Activated T-helper 1 cell treated with anti-CD3 and anti-CD28 coated beads, Interleukin-12 subunit alpha, Interleukin-12 subunit beta, Interleukin-2, Interleukin-4 antibody, amounts not matched to agents 30 ng/mL and 10 ng/mL and 1 ng/mL, durations not matched to agents 14 hours and 24 hours and 36 hours (primary cell): ENCODE measurements at regions of chr15 and their contacts with region 1.

Region 1: DNA sequence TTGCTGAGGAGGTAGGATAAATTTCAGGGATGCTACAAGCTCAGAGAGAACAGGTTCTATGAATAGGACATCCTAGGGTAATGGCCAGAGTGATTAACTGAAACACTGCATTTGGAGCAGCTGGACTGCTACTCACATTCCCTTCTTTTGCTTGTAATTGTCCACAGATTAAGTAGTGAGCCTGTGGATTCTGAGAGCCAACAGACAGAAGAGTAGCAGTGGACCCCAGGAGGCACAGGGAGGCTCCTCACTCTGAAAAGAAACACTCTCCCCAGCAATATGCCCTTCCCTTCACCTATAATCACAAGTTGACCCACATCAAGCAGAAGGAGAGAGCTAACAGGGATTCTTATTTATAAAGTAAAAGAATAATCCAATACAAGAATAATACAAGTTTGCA is 10.6 kb upstream of the RFX7 start:
- DNase-seq: no peak
- H3K4me3 Mint-ChIP-seq: no peak overlapping the region
- H3K27ac Mint-ChIP-seq: no peak overlapping the region
- H3K4me1 Mint-ChIP-seq: no peaks in the 10 kb centered on the region
- H3K27me3 Mint-ChIP-seq: peaks cover 23% of the 10 kb centered on the region

Region 2: DNA sequence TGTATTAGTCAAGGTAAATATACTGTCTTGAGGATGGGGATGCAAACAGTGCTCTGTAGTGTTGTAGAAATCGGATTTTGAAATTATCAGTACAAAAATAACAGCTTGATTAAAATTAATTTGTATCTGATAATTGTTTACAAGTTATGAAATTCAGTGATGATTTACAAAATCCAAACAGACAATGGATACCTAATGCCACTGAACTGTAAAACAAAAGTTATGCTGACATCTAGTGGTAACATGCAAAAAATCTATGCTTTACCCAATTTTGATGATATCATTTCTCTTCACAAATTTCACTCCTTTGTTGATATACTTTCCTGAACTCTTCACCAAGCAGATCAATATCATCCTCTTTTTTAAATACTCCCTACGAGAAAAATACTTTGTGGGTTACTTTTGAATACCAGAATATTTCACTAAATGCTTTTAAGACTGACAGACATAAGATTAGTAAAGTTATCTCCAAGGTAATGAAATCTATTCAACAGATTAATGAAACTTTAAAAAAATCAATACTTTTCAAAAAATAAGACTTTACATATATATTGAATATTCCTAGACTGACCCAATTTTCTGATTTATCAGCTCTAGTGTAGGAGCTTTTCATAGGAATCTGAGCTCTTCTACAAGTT is 174.7 kb after region 1 on chr15:
- intact Hi-C with region 1: loop called (anchors 2 kb)
- DNase-seq: no peak
- H3K4me3 Mint-ChIP-seq: no peak overlapping the region
- H3K27ac Mint-ChIP-seq: no peak overlapping the region
- H3K4me1 Mint-ChIP-seq: no peaks in the 10 kb centered on the region
- H3K27me3 Mint-ChIP-seq: no peaks in the 10 kb centered on the region